Sciatic nerve (tissue), 2 donors: ENCODE measurements at regions of chr22 and their contacts with region 1.

Region 1: DNA sequence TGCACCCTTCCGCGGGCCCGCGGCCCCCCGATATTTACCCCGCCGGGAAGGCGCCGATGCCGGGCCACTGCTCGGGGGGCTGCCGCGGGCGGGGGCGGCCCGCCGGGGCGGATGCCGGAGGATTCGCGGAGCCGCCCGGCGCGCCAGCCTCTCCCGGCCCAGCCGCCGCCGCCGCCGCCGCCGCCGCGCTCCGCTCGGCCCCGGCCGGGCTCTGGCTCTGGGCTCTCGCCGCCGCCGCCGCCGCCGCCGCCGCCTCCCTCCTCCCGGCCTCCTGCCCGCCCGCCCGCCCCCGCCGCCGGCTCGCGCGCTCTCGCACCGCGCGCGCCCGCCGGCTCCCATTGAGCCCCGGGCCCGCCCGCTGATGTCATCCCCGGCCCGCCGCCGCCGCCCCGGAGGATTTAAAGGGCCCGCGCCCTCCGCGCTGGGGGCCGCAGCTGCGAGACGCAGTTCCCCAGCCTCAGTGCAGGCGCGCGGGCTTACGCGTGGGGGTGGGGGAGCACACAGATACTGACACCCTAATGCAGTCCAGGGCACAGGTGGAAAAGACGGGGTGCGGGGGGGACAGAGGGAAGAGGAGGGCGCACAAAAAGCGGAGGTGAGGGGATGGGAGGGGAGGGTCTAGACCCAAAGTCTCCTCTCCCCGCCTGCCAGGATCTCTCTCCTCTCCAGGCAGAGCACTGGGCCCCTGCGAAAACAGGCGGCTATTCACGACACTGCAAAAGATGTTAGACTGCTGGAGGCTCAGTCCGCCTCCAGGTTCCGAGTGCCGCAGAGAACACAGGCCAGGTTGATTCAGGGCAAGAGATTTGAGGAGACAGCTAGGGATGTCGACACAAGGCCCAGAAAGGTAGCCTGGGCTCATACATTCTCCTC is at the start of gene CSNK1E:
- DNase-seq: peak; percentile 91
- ATAC-seq: peak; percentile 73
- total RNA-seq, gene CSNK1E: 184 TPM

Region 2: DNA sequence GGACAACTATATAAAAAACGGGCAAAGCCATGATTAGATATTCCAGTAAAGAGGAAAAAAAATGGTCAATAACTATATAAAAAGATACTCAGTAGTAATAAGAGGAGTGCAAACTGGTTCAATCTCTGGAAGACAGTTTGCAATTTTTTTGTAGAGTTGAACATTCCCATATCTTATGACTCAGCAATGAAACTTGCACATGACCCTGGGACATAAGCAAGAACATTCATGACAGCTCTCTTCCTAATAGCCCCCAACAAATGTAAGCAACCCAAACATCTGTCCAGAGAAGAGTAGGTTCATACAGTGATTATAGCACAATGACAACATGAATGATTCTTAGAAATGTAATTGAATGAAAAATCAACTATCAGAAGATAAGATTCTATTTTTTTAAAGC is 1425.7 kb before region 1 on chr22:
- intact Hi-C with region 1: no loop called
- DNase-seq: no peak
- ATAC-seq: no peak

Region 3: GRCh38 chr22:37007651-37008050 is 1309.7 kb before region 1 on chr22:
- intact Hi-C with region 1: no loop called
- DNase-seq: no peak
- ATAC-seq: no peak

Region 4: GRCh38 chr22:38240734-38241252 is 76.6 kb before region 1 on chr22:
- intact Hi-C with region 1: loop called (anchors 10 kb)
- DNase-seq: no peak
- ATAC-seq: no peak

Region 5: DNA sequence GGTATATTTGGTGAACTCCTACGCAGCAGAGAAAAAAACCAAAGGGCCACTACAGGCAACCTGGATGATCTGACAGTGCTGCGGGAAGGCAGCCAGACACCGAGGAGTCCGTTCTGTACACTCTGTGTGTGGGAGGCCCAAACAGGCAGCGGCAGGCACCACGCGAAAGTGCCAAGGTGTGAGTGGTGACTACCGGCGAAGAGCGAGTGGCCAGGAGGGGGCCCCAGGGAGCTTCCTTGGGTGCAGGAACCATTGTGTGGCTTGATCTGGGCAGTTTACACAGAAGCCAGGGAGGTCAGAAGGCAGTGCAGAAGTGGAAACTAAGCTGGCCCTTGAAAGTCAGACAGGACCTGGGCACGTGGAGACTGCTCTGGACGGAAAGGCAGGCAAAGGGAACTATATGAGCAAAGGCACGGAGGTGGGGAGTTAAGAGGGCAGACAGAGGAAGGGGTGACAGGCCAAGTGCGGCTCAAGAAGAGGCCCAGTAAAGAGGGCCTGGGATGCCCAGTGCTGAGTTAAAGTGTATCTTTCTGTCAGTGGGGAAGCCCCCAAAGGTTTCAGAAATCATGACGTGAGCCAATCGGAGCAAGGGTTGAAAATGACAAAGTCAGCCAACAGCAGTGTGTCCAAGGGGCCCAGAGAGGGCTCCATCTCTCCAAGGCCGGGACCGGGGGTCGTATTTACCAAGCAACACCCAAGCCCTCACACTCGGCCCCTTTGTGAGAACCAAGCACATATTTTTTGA is 55.1 kb before region 1 on chr22:
- intact Hi-C with region 1: no loop called
- DNase-seq: no peak
- ATAC-seq: peak; percentile 36

Region 6: DNA sequence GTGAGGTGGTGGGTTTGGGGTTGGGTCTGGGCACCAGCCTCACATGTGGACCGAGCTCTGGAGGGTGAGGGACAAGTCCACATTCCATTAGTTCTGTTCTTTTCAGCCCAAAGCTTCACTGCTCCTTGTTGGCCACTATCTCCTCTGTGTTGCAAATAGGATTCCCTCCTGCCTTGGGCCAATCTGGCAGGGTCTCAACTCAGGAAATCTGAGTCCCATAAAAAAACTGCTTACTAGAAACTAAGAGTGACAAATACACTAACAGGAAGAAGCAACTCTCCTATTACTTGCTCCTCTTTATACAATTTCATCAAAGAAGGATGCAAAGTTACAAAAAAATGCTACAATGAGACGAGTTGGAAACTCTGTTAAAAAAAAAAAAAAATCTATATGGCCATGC is 66.1 kb after region 1 on chr22:
- intact Hi-C with region 1: no loop called
- DNase-seq: no peak
- ATAC-seq: no peak